CD4-positive, alpha-beta memory T cell (primary cell): ENCODE measurements at regions of chr2 and their contacts with region 1.

Region 1: GRCh38 chr2:100562732-100563720 is at the start of gene PDCL3:
- DNase-seq: peak; percentile 94 to 98 (median 96)
- H3K4me3 ChIP-seq: peak within 1 kb of the TSS; percentile 84 to 89
- H3K4me3 Mint-ChIP-seq: peak within 1 kb of the TSS; percentile 93 to 100 (median 96)
- H3K27ac ChIP-seq: peak within 1 kb of the TSS; percentile 74
- H3K27ac Mint-ChIP-seq: peak within 1 kb of the TSS; percentile 98 to 100 (median 99)
- H3K4me1 ChIP-seq: peaks cover 35% of the 10 kb centered on the region
- H3K4me1 Mint-ChIP-seq: peaks cover 26 to 54% (median 37%) of the 10 kb centered on the region in 4 donors
- H3K27me3 ChIP-seq: no peaks in the 10 kb centered on the region
- H3K27me3 Mint-ChIP-seq: no peaks in the 10 kb centered on the region
- total RNA-seq, gene PDCL3: 16.6 to 17.8 TPM

Region 2: DNA sequence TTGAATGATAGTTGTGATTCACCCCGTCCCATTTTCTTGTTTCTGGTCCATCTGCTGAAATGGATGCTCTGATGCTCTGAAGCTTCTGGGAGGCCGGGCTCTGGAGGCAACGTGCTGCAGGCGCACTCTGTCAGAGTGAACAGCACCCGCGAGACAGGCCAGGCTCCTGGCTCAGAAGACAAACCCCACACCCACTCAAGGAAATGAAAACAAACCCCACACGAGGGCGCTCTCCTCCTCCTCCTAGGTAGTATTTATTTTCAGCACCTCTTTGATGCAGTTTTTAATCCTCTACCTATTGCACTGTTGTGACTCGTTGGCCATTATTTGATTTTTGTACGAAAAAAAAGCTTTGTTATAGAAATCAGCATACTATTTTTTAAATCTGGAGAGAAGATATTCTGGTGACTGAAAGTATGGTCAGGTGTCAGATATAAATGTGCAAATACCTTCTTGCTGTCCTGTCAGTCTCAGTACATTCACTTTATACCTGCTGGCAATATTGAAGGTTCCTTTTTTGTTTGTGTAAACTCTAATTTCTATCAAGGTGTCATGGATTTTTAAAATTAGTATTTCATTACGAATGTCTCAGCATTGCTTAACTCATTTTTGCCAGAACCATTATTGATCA is 135.3 kb before region 1 on chr2:
- CTCF ChIA-PET with region 1: interaction called, 3 read pairs
- POLR2A ChIA-PET with region 1: no interaction called
- intact Hi-C with region 1: loop called (anchors 5 kb)
- DNase-seq: peak; percentile 45 to 57 (median 45)
- H3K4me3 ChIP-seq: no peak overlapping the region
- H3K4me3 Mint-ChIP-seq: no peak overlapping the region
- H3K27ac ChIP-seq: no peak overlapping the region
- H3K27ac Mint-ChIP-seq: peak overlapping the region in 1 of 7 donors; percentile 71
- H3K4me1 ChIP-seq: no peaks in the 10 kb centered on the region
- H3K4me1 Mint-ChIP-seq: peaks cover 3 to 6% (median 5%) of the 10 kb centered on the region in 4 donors
- H3K27me3 ChIP-seq: peaks cover 5% of the 10 kb centered on the region
- H3K27me3 Mint-ChIP-seq: peaks cover 8 to 15% of the 10 kb centered on the region in 2 donors

Region 3: GRCh38 chr2:100580367-100581276 is 17.6 kb after region 1 on chr2:
- CTCF ChIA-PET with region 1: interaction called, 23 read pairs
- POLR2A ChIA-PET with region 1: interaction called, 101 read pairs
- intact Hi-C with region 1: loop called (anchors 1 kb)
- DNase-seq: peak; percentile 73 to 90 (median 80)
- H3K4me3 ChIP-seq: peak overlapping the region in 1 of 2 donors; percentile 17
- H3K4me3 Mint-ChIP-seq: peak overlapping the region in 7 of 8 donors; percentile 32 to 81 (median 69)
- H3K27ac ChIP-seq: peak overlapping the region; percentile 71
- H3K27ac Mint-ChIP-seq: peak overlapping the region; percentile 93 to 99 (median 98)
- H3K4me1 ChIP-seq: peaks cover 37% of the 10 kb centered on the region
- H3K4me1 Mint-ChIP-seq: peaks cover 24 to 52% (median 42%) of the 10 kb centered on the region in 4 donors
- H3K27me3 ChIP-seq: no peaks in the 10 kb centered on the region
- H3K27me3 Mint-ChIP-seq: no peaks in the 10 kb centered on the region

Region 4: DNA sequence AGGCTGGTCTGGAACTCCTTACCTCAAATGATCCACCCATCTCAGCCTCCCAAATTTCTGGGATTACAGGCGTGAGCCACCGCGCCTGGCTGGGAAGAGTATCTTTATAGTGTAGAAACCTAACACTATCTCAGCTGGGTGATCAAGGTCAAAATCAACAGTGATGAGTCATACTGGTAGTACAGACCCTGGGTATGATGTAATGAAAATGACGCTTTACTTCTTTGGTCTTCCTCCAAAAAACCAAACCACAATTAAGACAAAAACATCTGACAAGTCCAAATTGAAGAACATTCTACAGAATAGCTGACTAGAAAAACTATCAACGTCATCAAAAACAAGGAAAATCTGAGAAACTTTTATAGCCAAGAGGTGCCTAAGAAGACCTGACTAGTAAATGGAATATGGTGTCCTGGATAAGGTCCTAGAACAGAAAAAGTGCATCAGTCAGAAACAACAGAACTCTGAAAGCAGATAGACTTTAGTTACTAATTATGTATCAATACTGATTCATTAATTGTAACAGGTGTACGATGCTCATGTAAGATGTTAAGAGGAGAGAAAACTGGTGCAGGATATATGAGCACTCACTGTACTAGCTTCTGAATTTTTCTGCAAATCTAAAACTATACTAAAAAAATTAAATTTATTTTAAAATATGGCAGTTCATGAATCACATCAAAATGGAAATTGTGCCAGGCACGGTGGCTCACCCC is 25.2 kb after region 1 on chr2:
- CTCF ChIA-PET with region 1: interaction called, 5 read pairs
- POLR2A ChIA-PET with region 1: interaction called, 26 read pairs
- intact Hi-C with region 1: loop called (anchors 1 kb)
- DNase-seq: peak; percentile 66 to 81 (median 73)
- H3K4me3 ChIP-seq: no peak overlapping the region
- H3K4me3 Mint-ChIP-seq: peak overlapping the region in 1 of 8 donors; percentile 6
- H3K27ac ChIP-seq: no peak overlapping the region
- H3K27ac Mint-ChIP-seq: peak overlapping the region; percentile 30 to 89 (median 70)
- H3K4me1 ChIP-seq: peaks cover 24% of the 10 kb centered on the region
- H3K4me1 Mint-ChIP-seq: peaks cover 16 to 47% (median 30%) of the 10 kb centered on the region in 4 donors
- H3K27me3 ChIP-seq: no peaks in the 10 kb centered on the region
- H3K27me3 Mint-ChIP-seq: no peaks in the 10 kb centered on the region

Region 5: GRCh38 chr2:100692381-100692780 is 129.4 kb after region 1 on chr2:
- CTCF ChIA-PET with region 1: no interaction called
- POLR2A ChIA-PET with region 1: no interaction called
- intact Hi-C with region 1: no loop called
- DNase-seq: no peak
- H3K4me3 ChIP-seq: no peak overlapping the region
- H3K4me3 Mint-ChIP-seq: no peak overlapping the region
- H3K27ac ChIP-seq: no peak overlapping the region
- H3K27ac Mint-ChIP-seq: no peak overlapping the region
- H3K4me1 ChIP-seq: no peaks in the 10 kb centered on the region
- H3K4me1 Mint-ChIP-seq: peaks cover 0 to 1% (median 0%) of the 10 kb centered on the region in 4 donors
- H3K27me3 ChIP-seq: no peaks in the 10 kb centered on the region
- H3K27me3 Mint-ChIP-seq: peaks cover 5 to 14% of the 10 kb centered on the region in 2 donors

Region 6: GRCh38 chr2:101001691-101002561 is 438.9 kb after region 1 on chr2 and contains the start of gene RPL31:
- CTCF ChIA-PET with region 1: interaction called, 5 read pairs
- POLR2A ChIA-PET with region 1: interaction called, 50 read pairs
- intact Hi-C with region 1: loop called (anchors 1 kb)
- DNase-seq: peak; percentile 93 to 98 (median 96)
- H3K4me3 ChIP-seq: peak within 1 kb of the TSS; percentile 97 to 98
- H3K4me3 Mint-ChIP-seq: peak within 1 kb of the TSS; percentile 90 to 96 (median 95)
- H3K27ac ChIP-seq: peak within 1 kb of the TSS; percentile 91
- H3K27ac Mint-ChIP-seq: peak within 1 kb of the TSS; percentile 91 to 99 (median 98)
- H3K4me1 ChIP-seq: peaks cover 37% of the 10 kb centered on the region
- H3K4me1 Mint-ChIP-seq: peaks cover 32 to 51% (median 45%) of the 10 kb centered on the region in 4 donors
- H3K27me3 ChIP-seq: no peaks in the 10 kb centered on the region
- H3K27me3 Mint-ChIP-seq: no peaks in the 10 kb centered on the region
- total RNA-seq, gene RPL31: 2,455 to 2,531 TPM

Region 7: GRCh38 chr2:101151141-101151858 is 588.3 kb after region 1 on chr2 and contains the start of gene TBC1D8:
- CTCF ChIA-PET with region 1: interaction called, 3 read pairs
- POLR2A ChIA-PET with region 1: no interaction called
- intact Hi-C with region 1: loop called (anchors 5 kb)
- DNase-seq: peak; percentile 38 to 65 (median 55)
- H3K4me3 ChIP-seq: peak within 1 kb of the TSS; percentile 28 to 33
- H3K4me3 Mint-ChIP-seq: peak within 1 kb of the TSS; percentile 77 to 92 (median 86)
- H3K27ac ChIP-seq: no peak within 1 kb of the TSS
- H3K27ac Mint-ChIP-seq: peak within 1 kb of the TSS; percentile 19 to 88 (median 71)
- H3K4me1 ChIP-seq: peaks cover 19% of the 10 kb centered on the region
- H3K4me1 Mint-ChIP-seq: peaks cover 18 to 27% (median 22%) of the 10 kb centered on the region in 4 donors
- H3K27me3 ChIP-seq: no peaks in the 10 kb centered on the region
- H3K27me3 Mint-ChIP-seq: peaks cover 2 to 7% of the 10 kb centered on the region in 2 donors
- total RNA-seq, gene TBC1D8: 2.0 to 2.4 TPM